GM13976 (cell line): ENCODE measurements at regions of chr7 and their contacts with region 1.

Region 1: GRCh38 chr7:81956520-81956919 is 186.7 kb upstream of the HGF start:
- DNase-seq: no peak
- CTCF ChIP-seq: peak; percentile 18

Region 2: DNA sequence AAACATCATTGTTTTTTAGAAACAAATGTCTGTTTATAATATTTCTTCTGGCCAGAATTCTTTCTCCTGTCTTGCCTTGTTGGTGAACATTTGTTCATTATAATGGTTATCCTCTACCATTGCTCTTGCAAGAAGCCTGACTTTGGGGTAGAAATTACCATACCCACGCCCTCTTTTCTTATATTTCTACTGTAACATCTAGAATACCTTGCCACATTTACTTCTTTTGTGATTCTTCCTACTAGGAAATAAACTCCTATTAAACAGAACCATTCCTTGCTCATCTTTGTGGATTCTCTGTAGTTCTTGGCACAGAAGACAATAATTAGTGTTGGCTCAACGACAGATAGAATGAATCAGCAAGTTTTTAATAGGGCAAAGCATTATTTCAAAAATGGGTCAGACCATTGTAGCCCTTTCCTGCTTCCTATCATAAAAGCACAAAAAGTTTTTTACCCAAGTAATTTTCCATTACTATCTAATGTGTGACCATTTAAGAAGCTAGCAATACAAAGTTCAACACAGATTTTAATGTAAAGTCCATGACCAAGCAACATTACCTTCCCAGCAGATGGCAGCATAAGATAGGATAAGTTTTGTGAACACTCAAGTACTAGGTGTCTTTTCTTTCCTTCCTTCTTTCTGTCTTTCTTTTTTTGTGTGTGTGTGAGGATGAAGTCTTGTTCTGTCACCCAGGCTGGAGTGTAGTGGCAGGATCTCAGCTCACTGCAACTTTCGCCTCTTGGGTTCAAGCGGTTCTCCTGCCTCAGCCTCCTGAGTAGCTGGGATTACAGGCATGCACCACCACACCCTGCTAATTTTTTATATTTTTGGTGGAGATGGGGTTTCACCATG is 457.0 kb before region 1 on chr7:
- in situ Hi-C with region 1: loop called (anchors 25 kb)
- DNase-seq: peak; percentile 24
- CTCF ChIP-seq: peak; percentile 22